Naive thymus-derived CD4-positive, alpha-beta T cell (primary cell): ENCODE measurements at regions of chr10 and their contacts with region 1.

Region 1: GRCh38 chr10:132307823-132308587 is at the start of gene STK32C:
- DNase-seq: peak; percentile 76 to 89 (median 87)
- ATAC-seq: peak; percentile 97
- H3K4me3 ChIP-seq: peak within 1 kb of the TSS; percentile 65
- H3K4me3 Mint-ChIP-seq: peak within 1 kb of the TSS; percentile 83 to 93 (median 86)
- H3K27ac ChIP-seq: peak within 1 kb of the TSS; percentile 73
- H3K27ac Mint-ChIP-seq: peak within 1 kb of the TSS in 6 of 9 donors; percentile 17 to 77 (median 56)
- H3K4me1 ChIP-seq: peaks cover 4 to 6% of the 10 kb centered on the region in 2 donors
- H3K4me1 Mint-ChIP-seq: peaks cover 0 to 20% (median 12%) of the 10 kb centered on the region in 7 donors
- H3K27me3 ChIP-seq: no peaks in the 10 kb centered on the region
- H3K27me3 Mint-ChIP-seq: peaks cover 0 to 46% (median 0%) of the 10 kb centered on the region in 5 donors
- total RNA-seq, gene STK32C: 8.7 to 19.4 (median 12.0) TPM

Region 2: DNA sequence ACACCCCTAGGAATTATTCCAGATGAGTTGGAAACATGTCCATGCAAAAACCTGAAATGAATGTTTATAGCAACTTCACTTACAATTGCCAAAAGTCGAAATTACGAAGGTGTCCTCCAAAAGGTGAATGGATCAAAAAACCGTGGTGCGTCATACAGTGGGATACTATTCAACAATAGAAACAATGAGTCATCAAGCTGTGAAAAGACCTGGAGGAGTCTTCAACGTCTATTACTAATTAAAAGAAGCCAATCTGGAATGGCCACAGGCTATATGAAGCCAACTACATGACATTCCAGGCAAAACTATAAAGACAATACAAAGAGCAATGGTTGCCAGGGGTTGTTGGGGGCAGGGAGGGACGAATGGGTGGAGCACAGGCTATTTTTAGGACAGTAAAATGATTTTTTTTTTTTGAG is 419.8 kb before region 1 on chr10:
- CTCF ChIA-PET with region 1: no interaction called
- POLR2A ChIA-PET with region 1: no interaction called
- intact Hi-C with region 1: no loop called
- DNase-seq: no peak
- ATAC-seq: no peak
- H3K4me3 ChIP-seq: no peak overlapping the region
- H3K4me3 Mint-ChIP-seq: no peak overlapping the region
- H3K27ac ChIP-seq: no peak overlapping the region
- H3K27ac Mint-ChIP-seq: no peak overlapping the region
- H3K4me1 ChIP-seq: peaks cover 0 to 15% of the 10 kb centered on the region in 2 donors
- H3K4me1 Mint-ChIP-seq: peaks cover 0 to 14% (median 10%) of the 10 kb centered on the region in 7 donors
- H3K27me3 ChIP-seq: no peaks in the 10 kb centered on the region
- H3K27me3 Mint-ChIP-seq: peaks cover 0 to 12% (median 0%) of the 10 kb centered on the region in 5 donors

Region 3: DNA sequence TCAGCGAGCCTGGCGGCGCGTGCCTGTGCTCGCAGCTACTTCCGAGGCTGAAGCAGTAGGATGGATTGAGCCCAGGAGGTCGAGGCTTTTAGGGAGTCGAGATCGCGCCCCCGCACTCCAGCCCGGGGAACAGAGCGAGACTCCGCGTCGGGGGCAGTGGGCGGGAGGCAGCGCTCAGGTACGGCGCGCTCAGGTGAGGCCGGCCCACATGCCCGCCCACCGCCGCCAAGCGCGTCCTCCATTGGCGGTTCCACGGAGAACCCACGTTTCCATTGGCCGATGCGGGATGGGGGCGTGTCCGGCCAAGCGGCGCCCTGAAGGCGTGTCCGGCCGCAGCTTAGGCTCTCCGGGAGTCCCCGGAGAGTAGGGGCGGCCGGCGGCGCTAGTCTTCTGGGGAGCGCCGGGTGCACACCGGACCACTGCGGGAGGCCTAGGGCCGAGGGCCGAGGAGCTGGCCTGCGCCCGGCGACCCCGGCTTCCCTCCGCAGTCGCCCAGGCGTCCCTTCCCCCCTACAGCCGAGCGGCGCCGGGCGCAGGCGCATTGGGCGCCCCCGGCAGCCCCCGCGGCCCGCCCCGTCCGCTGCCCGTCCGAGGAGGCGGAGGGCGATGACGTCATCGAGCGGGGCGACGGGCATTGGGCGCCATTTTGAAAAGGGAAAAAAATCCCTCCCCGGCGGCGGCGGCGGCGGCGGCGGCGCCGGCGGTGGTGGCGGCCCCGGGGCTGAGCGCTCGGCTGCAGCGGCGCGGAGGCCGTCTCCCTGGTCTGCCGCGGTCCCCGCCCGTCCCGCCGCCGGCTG is 407.5 kb before region 1 on chr10 and contains the start of gene PPP2R2D:
- CTCF ChIA-PET with region 1: no interaction called
- POLR2A ChIA-PET with region 1: no interaction called
- intact Hi-C with region 1: loop called (anchors 2 to 5 kb)
- DNase-seq: peak; percentile 95 to 99 (median 97)
- ATAC-seq: peak; percentile 90
- H3K4me3 ChIP-seq: peak within 1 kb of the TSS; percentile 64
- H3K4me3 Mint-ChIP-seq: peak within 1 kb of the TSS; percentile 90 to 95 (median 92)
- H3K27ac ChIP-seq: peak within 1 kb of the TSS; percentile 94
- H3K27ac Mint-ChIP-seq: peak within 1 kb of the TSS; percentile 86 to 97 (median 93)
- H3K4me1 ChIP-seq: peaks cover 34 to 40% of the 10 kb centered on the region in 2 donors
- H3K4me1 Mint-ChIP-seq: peaks cover 30 to 67% (median 61%) of the 10 kb centered on the region in 7 donors
- H3K27me3 ChIP-seq: no peaks in the 10 kb centered on the region
- H3K27me3 Mint-ChIP-seq: peaks cover 0 to 18% (median 0%) of the 10 kb centered on the region in 5 donors
- total RNA-seq, gene PPP2R2D: 37.1 to 61.3 (median 40.1) TPM

Region 4: DNA sequence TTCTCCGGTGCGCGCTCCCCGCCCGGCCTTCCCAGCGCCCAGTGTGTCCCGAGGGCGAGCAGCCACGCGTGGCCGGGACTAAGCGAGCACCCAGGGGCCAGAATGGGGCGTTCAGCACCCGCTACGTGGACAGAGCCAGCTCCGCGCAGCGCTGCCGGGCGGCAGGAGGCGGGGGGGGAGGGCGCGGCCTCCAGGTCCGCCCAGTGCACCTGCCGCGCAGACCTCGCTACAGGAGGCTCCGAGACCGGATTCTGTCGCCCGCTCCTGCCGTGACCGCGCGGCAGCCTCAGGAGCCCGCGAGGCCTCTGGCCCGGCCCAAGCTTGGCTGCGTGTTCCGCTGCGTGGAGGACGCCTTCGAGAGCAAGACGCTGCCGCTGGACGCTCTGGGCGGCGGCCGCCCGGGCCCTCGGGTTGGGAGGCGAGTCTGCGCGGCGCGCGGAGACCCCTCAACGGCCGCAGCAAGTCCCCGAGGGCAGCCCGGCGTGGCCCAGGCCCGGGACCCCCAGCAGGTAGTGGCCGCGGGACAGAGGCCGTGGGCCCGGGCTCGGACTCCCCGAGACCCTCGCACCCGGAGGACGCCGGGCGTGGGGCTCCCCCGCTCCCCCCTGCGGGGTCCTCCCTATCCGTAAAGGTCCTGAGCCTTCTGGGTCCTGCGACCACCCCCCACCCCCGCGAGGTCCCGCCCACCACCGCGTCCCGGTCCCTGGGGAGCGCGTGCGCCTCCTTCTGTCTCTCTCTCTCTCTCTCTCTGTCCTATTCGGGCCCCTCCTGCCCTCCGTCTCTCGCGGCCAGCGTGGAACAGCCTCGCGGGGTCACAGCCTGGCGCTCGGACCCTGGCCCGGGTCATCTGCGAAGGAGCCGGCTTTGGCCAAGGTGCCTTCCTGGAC is 122.2 kb before region 1 on chr10:
- CTCF ChIA-PET with region 1: no interaction called
- POLR2A ChIA-PET with region 1: no interaction called
- intact Hi-C with region 1: loop called (anchors 1 kb)
- DNase-seq: peak; percentile 53 to 79 (median 66)
- ATAC-seq: peak; percentile 92
- H3K4me3 ChIP-seq: peak overlapping the region; percentile 27
- H3K4me3 Mint-ChIP-seq: peak overlapping the region; percentile 16 to 84 (median 63)
- H3K27ac ChIP-seq: peak overlapping the region; percentile 55
- H3K27ac Mint-ChIP-seq: peak overlapping the region in 3 of 9 donors; percentile 29 to 47 (median 41)
- H3K4me1 ChIP-seq: peaks cover 0 to 7% of the 10 kb centered on the region in 2 donors
- H3K4me1 Mint-ChIP-seq: peaks cover 3 to 28% (median 17%) of the 10 kb centered on the region in 7 donors
- H3K27me3 ChIP-seq: peaks cover 0 to 10% of the 10 kb centered on the region in 2 donors
- H3K27me3 Mint-ChIP-seq: peaks cover 0 to 38% (median 31%) of the 10 kb centered on the region in 5 donors

Region 5: DNA sequence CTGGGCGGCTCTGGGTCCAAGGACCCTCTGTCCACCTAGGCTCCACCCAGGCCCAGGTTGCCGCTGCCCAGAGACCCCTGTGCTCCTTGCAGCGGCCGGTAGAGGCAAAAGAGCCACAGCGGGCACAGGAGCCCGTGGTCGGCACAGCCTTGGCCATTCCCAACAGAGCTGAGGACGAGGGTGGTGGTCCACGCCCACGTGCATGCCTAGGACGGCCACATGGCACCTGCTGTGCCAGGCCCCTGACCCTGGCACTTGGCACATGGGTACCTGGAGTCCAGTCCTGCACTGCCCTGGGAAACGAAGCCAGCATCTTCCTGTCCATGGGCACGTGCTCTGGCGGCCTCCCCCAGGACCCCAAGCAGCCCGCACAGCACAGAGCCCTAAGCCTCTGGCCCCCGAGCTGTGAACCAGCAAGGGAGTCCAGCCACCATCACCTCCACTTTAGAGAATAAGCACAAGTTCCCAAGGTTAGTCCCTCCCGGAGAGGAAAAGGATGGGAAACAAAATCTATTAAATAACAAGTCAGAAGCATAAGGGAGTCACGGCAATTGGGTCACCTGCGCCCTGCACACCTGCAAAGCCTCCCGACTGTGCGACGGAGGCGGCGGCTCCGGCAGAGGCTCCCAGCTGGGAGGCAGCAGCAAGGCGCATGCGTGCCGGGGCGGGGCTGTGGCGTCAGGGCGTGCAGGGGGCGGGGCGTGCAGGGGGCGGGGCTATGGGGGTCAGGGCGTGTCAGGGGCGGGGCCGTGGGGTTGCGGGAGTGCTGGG is 59.4 kb before region 1 on chr10:
- CTCF ChIA-PET with region 1: no interaction called
- POLR2A ChIA-PET with region 1: no interaction called
- intact Hi-C with region 1: loop called in 1 of 2 experiments (anchors 1 kb)
- DNase-seq: peak in 8 of 9 donors; percentile 26 to 73 (median 58)
- ATAC-seq: peak; percentile 69
- H3K4me3 ChIP-seq: peak overlapping the region; percentile 33
- H3K4me3 Mint-ChIP-seq: peak overlapping the region in 6 of 10 donors; percentile 25 to 70 (median 52)
- H3K27ac ChIP-seq: no peak overlapping the region
- H3K27ac Mint-ChIP-seq: no peak overlapping the region
- H3K4me1 ChIP-seq: no peaks in the 10 kb centered on the region
- H3K4me1 Mint-ChIP-seq: peaks cover 0 to 6% (median 0%) of the 10 kb centered on the region in 7 donors
- H3K27me3 ChIP-seq: no peaks in the 10 kb centered on the region
- H3K27me3 Mint-ChIP-seq: no peaks in the 10 kb centered on the region

Region 6: GRCh38 chr10:132396495-132397035 is 88.6 kb after region 1 on chr10:
- CTCF ChIA-PET with region 1: no interaction called
- POLR2A ChIA-PET with region 1: no interaction called
- intact Hi-C with region 1: loop called in 1 of 2 experiments (anchors 5 kb)
- DNase-seq: peak; percentile 61 to 78 (median 74)
- ATAC-seq: peak; percentile 78
- H3K4me3 ChIP-seq: no peak overlapping the region
- H3K4me3 Mint-ChIP-seq: peak overlapping the region in 1 of 10 donors; percentile 94
- H3K27ac ChIP-seq: peak overlapping the region; percentile 77
- H3K27ac Mint-ChIP-seq: no peak overlapping the region
- H3K4me1 ChIP-seq: peaks cover 9 to 10% of the 10 kb centered on the region in 2 donors
- H3K4me1 Mint-ChIP-seq: peaks cover 0 to 42% (median 25%) of the 10 kb centered on the region in 7 donors
- H3K27me3 ChIP-seq: no peaks in the 10 kb centered on the region
- H3K27me3 Mint-ChIP-seq: peaks cover 0 to 6% (median 0%) of the 10 kb centered on the region in 5 donors

Region 7: DNA sequence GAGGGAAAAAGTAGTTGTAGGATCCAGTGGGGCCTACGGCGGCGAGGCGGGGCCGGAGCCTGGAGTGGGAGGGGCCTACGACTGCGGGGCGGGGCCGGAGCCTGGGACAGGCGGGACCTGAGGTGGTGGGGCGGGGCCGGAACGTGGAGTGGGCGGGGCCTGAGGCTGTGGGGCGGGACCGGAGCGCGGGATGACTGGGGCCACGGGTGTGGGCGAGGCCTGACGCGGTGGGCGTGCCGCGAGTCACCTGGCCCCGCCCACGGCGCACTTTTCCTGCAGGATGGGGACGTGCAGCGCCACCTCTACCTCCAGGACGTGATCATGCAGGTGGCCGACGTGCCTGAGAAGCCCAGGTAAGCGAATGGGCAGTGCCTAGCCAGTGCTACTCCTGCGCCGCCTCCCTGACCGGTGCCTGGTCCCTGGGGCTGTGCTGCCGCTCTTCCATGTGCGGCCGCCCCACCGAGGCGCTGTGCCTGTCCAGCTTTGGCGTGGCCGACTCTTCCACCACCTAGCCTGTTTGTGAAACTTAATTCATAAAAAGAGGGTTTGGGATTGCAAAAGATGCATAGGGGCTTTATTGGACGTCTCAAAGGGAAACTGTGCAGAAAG is 1001.2 kb after region 1 on chr10:
- CTCF ChIA-PET with region 1: no interaction called
- POLR2A ChIA-PET with region 1: no interaction called
- intact Hi-C with region 1: loop called (anchors 5 to 10 kb)
- DNase-seq: peak; percentile 92 to 99 (median 95)
- ATAC-seq: peak; percentile 90
- H3K4me3 ChIP-seq: peak overlapping the region; percentile 66
- H3K4me3 Mint-ChIP-seq: peak overlapping the region; percentile 53 to 97 (median 77)
- H3K27ac ChIP-seq: peak overlapping the region; percentile 100
- H3K27ac Mint-ChIP-seq: peak overlapping the region in 8 of 9 donors; percentile 72 to 98 (median 88)
- H3K4me1 ChIP-seq: peaks cover 8 to 10% of the 10 kb centered on the region in 2 donors
- H3K4me1 Mint-ChIP-seq: peaks cover 12 to 39% (median 30%) of the 10 kb centered on the region in 7 donors
- H3K27me3 ChIP-seq: no peaks in the 10 kb centered on the region
- H3K27me3 Mint-ChIP-seq: peaks cover 0 to 5% (median 0%) of the 10 kb centered on the region in 5 donors